B cell (primary cell): ENCODE measurements at regions of chr20 and their contacts with region 1.

Region 1: GRCh38 chr20:25065625-25066338 is 7.8 kb upstream of the ACSS1 start:
- DNase-seq: peak; percentile 88
- ATAC-seq: peak; percentile 88
- H3K4me3 ChIP-seq: no peak overlapping the region
- H3K4me3 Mint-ChIP-seq: no peak overlapping the region
- H3K27ac ChIP-seq: no peak overlapping the region
- H3K27ac Mint-ChIP-seq: no peak overlapping the region
- H3K4me1 ChIP-seq: peaks cover 24 to 27% of the 10 kb centered on the region in 2 donors
- H3K4me1 Mint-ChIP-seq: peaks cover 27% of the 10 kb centered on the region
- H3K27me3 ChIP-seq: peaks cover 0 to 12% (median 4%) of the 10 kb centered on the region in 4 experiments
- H3K27me3 Mint-ChIP-seq: peaks cover 14% of the 10 kb centered on the region
- CTCF ChIP-seq: peak; percentile 77

Region 2: GRCh38 chr20:23937303-23938117 is 1128.3 kb before region 1 on chr20:
- CTCF ChIA-PET with region 1: no interaction called
- POLR2A ChIA-PET with region 1: no interaction called
- intact Hi-C with region 1: loop called (anchors 5 kb)
- DNase-seq: peak; percentile 46
- ATAC-seq: peak; percentile 49
- H3K4me3 ChIP-seq: no peak overlapping the region
- H3K4me3 Mint-ChIP-seq: no peak overlapping the region
- H3K27ac ChIP-seq: no peak overlapping the region
- H3K27ac Mint-ChIP-seq: no peak overlapping the region
- H3K4me1 ChIP-seq: no peaks in the 10 kb centered on the region
- H3K4me1 Mint-ChIP-seq: no peaks in the 10 kb centered on the region
- H3K27me3 ChIP-seq: no peaks in the 10 kb centered on the region
- H3K27me3 Mint-ChIP-seq: peaks cover 3% of the 10 kb centered on the region
- CTCF ChIP-seq: peak; percentile 56

Region 3: DNA sequence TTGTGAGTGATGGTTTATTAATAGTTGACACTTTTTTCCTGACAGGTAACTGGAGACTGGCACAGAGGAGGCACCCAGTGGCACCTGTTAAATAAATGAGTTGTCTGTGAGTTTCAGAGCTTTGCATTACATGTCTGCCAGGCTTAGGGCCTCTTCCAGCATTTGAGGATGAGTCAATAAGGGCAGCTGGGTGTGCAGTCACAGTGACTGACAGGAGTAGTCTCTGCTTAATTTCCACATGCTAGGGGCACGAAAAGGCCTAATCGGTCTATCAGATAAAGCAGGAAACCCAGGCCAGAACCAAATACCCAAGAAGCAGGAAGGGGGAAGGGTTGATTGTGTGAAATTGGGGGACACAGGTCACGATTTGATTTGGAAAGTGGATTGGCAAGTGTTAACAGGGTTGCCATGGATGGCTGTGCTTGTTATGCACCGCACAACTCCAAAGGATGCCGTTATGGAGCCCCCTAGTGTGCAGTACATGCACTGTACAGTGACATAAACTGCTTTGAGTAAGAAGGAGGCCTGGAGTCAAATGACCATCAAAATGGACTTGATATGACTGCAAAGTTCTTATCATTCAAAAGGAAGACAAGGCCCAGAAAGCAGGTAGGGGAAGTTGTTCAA is 965.3 kb before region 1 on chr20:
- CTCF ChIA-PET with region 1: interaction called, 3 read pairs
- POLR2A ChIA-PET with region 1: no interaction called
- intact Hi-C with region 1: loop called (anchors 10 kb)
- DNase-seq: peak; percentile 19
- ATAC-seq: no peak
- H3K4me3 ChIP-seq: no peak overlapping the region
- H3K4me3 Mint-ChIP-seq: no peak overlapping the region
- H3K27ac ChIP-seq: no peak overlapping the region
- H3K27ac Mint-ChIP-seq: no peak overlapping the region
- H3K4me1 ChIP-seq: no peaks in the 10 kb centered on the region
- H3K4me1 Mint-ChIP-seq: no peaks in the 10 kb centered on the region
- H3K27me3 ChIP-seq: peaks cover 0 to 3% (median 0%) of the 10 kb centered on the region in 4 experiments
- H3K27me3 Mint-ChIP-seq: peaks cover 13% of the 10 kb centered on the region
- CTCF ChIP-seq: peak; percentile 36